Transverse colon (tissue), 4 donors: ENCODE measurements at regions of chr4 and their contacts with region 1.

Region 1: DNA sequence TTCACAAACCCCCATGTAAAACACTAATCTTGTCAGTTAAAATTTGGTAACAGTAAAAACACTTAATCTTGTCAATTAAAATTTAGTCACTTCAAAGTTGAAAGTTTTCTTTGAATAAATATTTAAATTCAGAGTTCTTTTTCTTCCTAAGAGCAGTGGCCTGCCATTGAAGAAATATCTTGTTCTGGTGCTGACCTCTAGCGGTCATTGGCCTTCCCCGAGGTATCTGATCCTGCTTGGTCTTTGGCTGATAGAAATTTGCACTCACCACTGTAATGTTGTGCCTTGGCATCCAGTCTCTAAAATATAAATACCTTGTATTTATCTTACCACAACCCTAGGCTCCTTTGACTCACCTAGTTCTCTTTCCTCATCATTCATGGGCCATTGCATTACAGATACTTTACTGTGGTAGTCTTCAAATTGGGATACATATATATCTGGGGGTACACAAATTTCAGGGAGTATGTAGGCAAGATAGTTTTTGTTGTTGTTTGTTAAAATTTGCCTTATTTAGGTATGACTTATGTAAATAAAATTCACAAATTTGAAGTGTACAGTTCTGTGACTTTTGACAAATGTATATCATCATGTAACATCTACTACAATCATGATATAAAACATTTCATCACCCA is 6.7 kb upstream of the ART3 start:
- DNase-seq: peak; percentile 81
- H3K4me3 ChIP-seq: no peak overlapping the region
- H3K27ac ChIP-seq: no peak overlapping the region
- H3K4me1 ChIP-seq: no peaks in the 10 kb centered on the region
- H3K27me3 ChIP-seq: no peaks in the 10 kb centered on the region
- CTCF ChIP-seq: peak; percentile 75 to 88 (median 77)
- EP300 ChIP-seq: no peak
- POLR2A ChIP-seq: no peak

Region 2: GRCh38 chr4:75895744-75896314 is 171.9 kb before region 1 on chr4:
- in situ Hi-C with region 1: loop called in 1 of 4 experiments (anchors 10 kb)
- intact Hi-C with region 1: no loop called
- DNase-seq: no peak
- H3K4me3 ChIP-seq: no peak overlapping the region
- H3K27ac ChIP-seq: no peak overlapping the region
- H3K4me1 ChIP-seq: no peaks in the 10 kb centered on the region
- H3K27me3 ChIP-seq: no peaks in the 10 kb centered on the region
- CTCF ChIP-seq: peak; percentile 59 to 69 (median 65)
- EP300 ChIP-seq: no peak
- POLR2A ChIP-seq: no peak

Region 3: DNA sequence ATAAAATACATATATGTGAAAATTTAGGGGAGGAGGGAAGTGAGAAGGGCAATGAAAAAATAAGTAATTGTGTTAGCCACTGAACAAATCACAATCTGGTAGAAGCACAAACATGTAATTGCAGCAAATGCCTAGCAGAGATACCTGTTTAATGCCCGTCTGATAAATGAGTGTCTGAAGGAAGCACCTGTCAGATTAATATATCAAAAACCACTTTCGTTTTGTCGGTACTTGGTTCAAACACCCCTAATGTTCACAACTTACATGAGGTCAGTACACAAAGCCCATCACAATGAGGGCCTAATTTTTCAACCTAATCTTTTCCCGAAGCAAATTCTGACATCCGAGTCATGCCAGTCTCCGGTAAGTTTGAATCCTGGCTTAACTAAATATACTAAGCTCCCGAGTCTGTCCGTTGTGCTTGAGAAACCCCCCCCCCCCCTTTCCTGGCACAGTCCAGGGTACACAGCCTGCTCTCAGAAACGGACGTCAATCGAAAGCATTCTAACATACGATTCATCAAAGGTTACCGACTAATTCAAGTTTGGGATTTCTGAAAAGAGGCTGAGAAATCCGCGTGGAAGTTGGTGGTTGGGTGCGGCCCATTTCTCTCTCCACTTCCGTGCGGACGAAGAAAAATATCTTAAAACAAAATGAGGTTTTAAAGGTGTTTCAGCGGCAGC is 77.8 kb before region 1 on chr4:
- in situ Hi-C with region 1: loop called in 3 of 4 experiments (anchors 5 kb)
- intact Hi-C with region 1: loop called (anchors 5 kb)
- DNase-seq: no peak
- H3K4me3 ChIP-seq: peak overlapping the region; percentile 59 to 93 (median 66)
- H3K27ac ChIP-seq: peak overlapping the region; percentile 68 to 77 (median 77)
- H3K4me1 ChIP-seq: peaks cover 12 to 19% (median 16%) of the 10 kb centered on the region in 4 donors
- H3K27me3 ChIP-seq: no peaks in the 10 kb centered on the region
- CTCF ChIP-seq: no peak
- EP300 ChIP-seq: no peak
- POLR2A ChIP-seq: no peak

Region 4: GRCh38 chr4:75995727-75996126 is 72.0 kb before region 1 on chr4:
- in situ Hi-C with region 1: loop called (anchors 5 kb)
- intact Hi-C with region 1: loop called (anchors 5 kb)
- DNase-seq: no peak
- H3K4me3 ChIP-seq: no peak overlapping the region
- H3K27ac ChIP-seq: no peak overlapping the region
- H3K4me1 ChIP-seq: peaks cover 0 to 13% (median 1%) of the 10 kb centered on the region in 4 donors
- H3K27me3 ChIP-seq: no peaks in the 10 kb centered on the region
- CTCF ChIP-seq: peak; percentile 64 to 75 (median 70)
- EP300 ChIP-seq: no peak
- POLR2A ChIP-seq: no peak

Region 5: GRCh38 chr4:76002176-76002575 is 65.6 kb before region 1 on chr4:
- in situ Hi-C with region 1: loop called in 3 of 4 experiments (anchors 5 kb)
- intact Hi-C with region 1: loop called (anchors 5 kb)
- DNase-seq: no peak
- H3K4me3 ChIP-seq: no peak overlapping the region
- H3K27ac ChIP-seq: no peak overlapping the region
- H3K4me1 ChIP-seq: peaks cover 0 to 12% (median 0%) of the 10 kb centered on the region in 4 donors
- H3K27me3 ChIP-seq: no peaks in the 10 kb centered on the region
- CTCF ChIP-seq: no peak
- EP300 ChIP-seq: no peak
- POLR2A ChIP-seq: no peak